ENCODE measurements at regions of chr13 and their contacts with region 1.

Region 1: GRCh38 chr13:31038834-31039552 is 106.5 kb downstream of the TEX26 start:
- DNase-seq: no peak
- H3K4me3 ChIP-seq: no peak overlapping the region
- H3K4me3 Mint-ChIP-seq: peak overlapping the region in 1 of 2 donors; percentile 43
- H3K27ac ChIP-seq: no peak overlapping the region
- H3K27ac Mint-ChIP-seq: no peak overlapping the region
- H3K4me1 ChIP-seq: peaks cover 12 to 17% of the 10 kb centered on the region in 2 donors
- H3K4me1 Mint-ChIP-seq: peaks cover 28% of the 10 kb centered on the region
- H3K27me3 ChIP-seq: peaks cover 5 to 28% of the 10 kb centered on the region in 2 donors
- H3K27me3 Mint-ChIP-seq: peaks cover 36 to 60% (median 54%) of the 10 kb centered on the region in 3 donors
- CTCF ChIP-seq: no peak

Region 2: GRCh38 chr13:30138511-30138910 is 900.5 kb before region 1 on chr13:
- intact Hi-C with region 1: loop called in 1 of 2 experiments (anchors 5 kb)
- DNase-seq: no peak
- H3K4me3 ChIP-seq: no peak overlapping the region
- H3K4me3 Mint-ChIP-seq: no peak overlapping the region
- H3K27ac ChIP-seq: no peak overlapping the region
- H3K27ac Mint-ChIP-seq: no peak overlapping the region
- H3K4me1 ChIP-seq: no peaks in the 10 kb centered on the region
- H3K4me1 Mint-ChIP-seq: peaks cover 6% of the 10 kb centered on the region
- H3K27me3 ChIP-seq: no peaks in the 10 kb centered on the region
- H3K27me3 Mint-ChIP-seq: peaks cover 0 to 2% (median 0%) of the 10 kb centered on the region in 3 donors
- CTCF ChIP-seq: no peak